Spleen (tissue), 13 donors: ENCODE measurements at regions of chr22 and their contacts with region 1.

Region 1: GRCh38 chr22:29394931-29395581 is 6.7 kb upstream of the AP1B1 start:
- DNase-seq: peak; percentile 85
- H3K4me3 ChIP-seq: no peak overlapping the region
- H3K27ac ChIP-seq: no peak overlapping the region
- H3K4me1 ChIP-seq: peaks cover 7 to 25% (median 11%) of the 10 kb centered on the region in 6 donors
- H3K27me3 ChIP-seq: no peaks in the 10 kb centered on the region
- CTCF ChIP-seq: peak; percentile 55 to 85 (median 77)
- POLR2A ChIP-seq: no peak

Region 2: DNA sequence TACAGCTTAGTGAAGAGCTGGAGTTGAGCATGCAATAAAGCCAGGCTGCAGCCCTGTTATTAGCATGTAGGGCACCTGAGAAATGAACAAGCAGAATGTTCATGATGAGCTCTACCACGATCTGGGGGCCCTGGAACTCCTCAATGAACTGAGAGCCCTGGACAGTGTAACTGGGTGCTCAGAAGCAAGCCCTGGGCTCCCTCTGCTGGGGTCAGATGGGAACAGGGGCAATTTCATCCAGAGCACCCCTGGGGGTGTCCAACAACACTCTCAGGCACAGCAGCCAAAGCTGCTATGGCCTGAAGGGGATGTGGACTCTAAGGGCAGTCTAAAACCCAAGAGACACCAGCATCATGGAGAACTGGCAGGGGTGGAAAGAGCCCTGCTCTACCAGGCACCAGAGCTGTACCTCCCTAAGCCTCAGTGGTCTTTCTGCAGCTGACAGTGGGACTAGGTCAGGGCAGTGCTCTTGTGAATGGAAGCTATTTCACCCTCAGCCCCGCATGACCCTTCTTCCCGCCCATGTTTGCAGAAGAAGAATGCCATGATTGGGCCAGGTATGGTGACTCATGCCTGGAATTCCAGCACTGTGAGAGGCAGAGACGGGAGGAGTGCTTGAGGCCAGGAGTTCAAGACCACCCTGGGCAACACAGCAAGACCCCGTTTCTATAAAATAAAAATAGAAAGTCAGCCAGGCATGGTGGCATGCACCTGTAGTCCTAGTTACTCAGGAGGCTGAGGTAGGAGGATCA is 129.6 kb after region 1 on chr22:
- intact Hi-C with region 1: loop called (anchors 10 kb)
- DNase-seq: peak; percentile 75
- H3K4me3 ChIP-seq: no peak overlapping the region
- H3K27ac ChIP-seq: no peak overlapping the region
- H3K4me1 ChIP-seq: no peaks in the 10 kb centered on the region
- H3K27me3 ChIP-seq: no peaks in the 10 kb centered on the region
- CTCF ChIP-seq: peak in 9 of 11 experiments; percentile 12 to 58 (median 43)
- POLR2A ChIP-seq: no peak

Region 3: GRCh38 chr22:29587938-29588699 is 193.1 kb after region 1 on chr22:
- intact Hi-C with region 1: no loop called
- DNase-seq: no peak
- H3K4me3 ChIP-seq: no peak overlapping the region
- H3K27ac ChIP-seq: no peak overlapping the region
- H3K4me1 ChIP-seq: peaks cover 0 to 8% (median 0%) of the 10 kb centered on the region in 6 donors
- H3K27me3 ChIP-seq: no peaks in the 10 kb centered on the region
- CTCF ChIP-seq: no peak
- POLR2A ChIP-seq: no peak